ENCODE measurements at regions of chr6 and their contacts with region 1.

Region 1: GRCh38 chr6:30013291-30013922 is 47.7 kb upstream of the POLR1H start:
- DNase-seq: no peak
- H3K4me3 Mint-ChIP-seq: no peak overlapping the region
- H3K27ac Mint-ChIP-seq: no peak overlapping the region
- H3K4me1 Mint-ChIP-seq: no peaks in the 10 kb centered on the region
- H3K27me3 Mint-ChIP-seq: peaks cover 3% of the 10 kb centered on the region

Region 2: GRCh38 chr6:29847871-29848630 is 165.4 kb before region 1 on chr6:
- intact Hi-C with region 1: loop called (anchors 1 kb)
- DNase-seq: peak; percentile 70
- H3K4me3 Mint-ChIP-seq: no peak overlapping the region
- H3K27ac Mint-ChIP-seq: no peak overlapping the region
- H3K4me1 Mint-ChIP-seq: peaks cover 20% of the 10 kb centered on the region
- H3K27me3 Mint-ChIP-seq: peaks cover 60% of the 10 kb centered on the region

Measured in activated T-helper 2 cell treated with anti-CD3 and anti-CD28 coated beads, Interferon-gamma antibody, Interleukin-2, Interleukin-4, amounts not matched to agents 10 μg/mL and 5 μg/mL and 100 μg/mL, durations not matched to agents 14 hours and 24 hours and 36 hours (primary cell).